Psoas muscle (tissue), 8 donors: ENCODE measurements at regions of chr5 and their contacts with region 1.

Region 1: DNA sequence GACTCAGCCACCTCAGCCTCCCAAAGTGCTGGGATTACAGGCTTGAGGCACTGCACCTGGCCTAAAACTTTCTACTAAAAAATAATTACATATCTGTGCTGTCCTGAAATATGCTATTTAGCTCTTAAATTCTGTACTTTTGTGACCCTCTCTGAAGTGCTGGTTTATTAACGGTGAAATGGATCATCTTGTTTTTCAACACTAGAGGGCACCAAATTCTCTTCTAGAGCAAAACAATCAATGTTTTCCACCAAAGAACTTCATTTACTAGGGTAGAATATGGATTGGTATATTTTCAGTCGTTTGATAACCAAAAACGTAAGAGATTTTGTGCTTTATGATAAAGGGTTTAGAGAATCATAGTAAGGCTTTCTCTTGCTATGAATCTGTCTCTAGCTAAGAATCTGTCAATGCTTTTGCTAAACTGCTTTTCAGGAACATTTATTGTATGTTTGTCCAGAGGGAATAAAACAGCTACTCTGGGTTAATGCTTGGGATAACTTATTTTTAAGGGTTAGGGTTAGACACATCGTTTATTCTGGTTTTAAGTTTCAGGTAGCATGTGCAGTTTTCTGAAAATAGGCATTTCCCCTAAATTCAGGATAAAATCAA is 63.6 kb downstream of the RNF180 start:
- DNase-seq: no peak
- ATAC-seq: peak in 1 of 4 donors; percentile 55
- H3K4me3 ChIP-seq: no peak overlapping the region
- H3K27ac ChIP-seq: no peak overlapping the region
- H3K4me1 ChIP-seq: no peaks in the 10 kb centered on the region
- H3K27me3 ChIP-seq: no peaks in the 10 kb centered on the region
- CTCF ChIP-seq: peak; percentile 68

Region 2: GRCh38 chr5:64140018-64140417 is 89.3 kb before region 1 on chr5:
- intact Hi-C with region 1: no loop called
- DNase-seq: no peak
- ATAC-seq: no peak
- H3K4me3 ChIP-seq: no peak overlapping the region
- H3K27ac ChIP-seq: no peak overlapping the region
- H3K4me1 ChIP-seq: peaks cover 10% of the 10 kb centered on the region
- H3K27me3 ChIP-seq: no peaks in the 10 kb centered on the region
- CTCF ChIP-seq: no peak

Region 3: DNA sequence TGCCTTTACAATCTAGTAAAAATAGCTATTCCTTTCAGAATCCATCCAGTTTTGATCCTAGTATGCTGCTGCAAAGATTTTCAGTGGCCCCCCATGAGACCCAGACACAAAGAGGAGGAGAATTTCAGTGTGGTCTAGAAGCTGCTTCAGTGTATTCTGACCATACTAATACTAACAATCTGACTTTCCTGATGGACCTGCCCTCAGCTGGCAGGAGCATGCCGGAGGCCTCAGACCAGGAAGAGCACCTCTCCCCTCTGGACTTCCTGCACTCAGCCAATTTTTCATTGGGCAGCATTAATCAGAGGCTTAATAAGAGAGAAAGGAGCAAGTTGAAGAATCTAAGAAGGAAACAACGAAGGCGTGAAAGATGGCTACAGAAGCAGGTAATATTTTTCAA is 15.1 kb before region 1 on chr5:
- intact Hi-C with region 1: loop called in 1 of 2 experiments (anchors 1 kb)
- DNase-seq: no peak
- ATAC-seq: no peak
- H3K4me3 ChIP-seq: no peak overlapping the region
- H3K27ac ChIP-seq: no peak overlapping the region
- H3K4me1 ChIP-seq: no peaks in the 10 kb centered on the region
- H3K27me3 ChIP-seq: no peaks in the 10 kb centered on the region
- CTCF ChIP-seq: no peak

Region 4: DNA sequence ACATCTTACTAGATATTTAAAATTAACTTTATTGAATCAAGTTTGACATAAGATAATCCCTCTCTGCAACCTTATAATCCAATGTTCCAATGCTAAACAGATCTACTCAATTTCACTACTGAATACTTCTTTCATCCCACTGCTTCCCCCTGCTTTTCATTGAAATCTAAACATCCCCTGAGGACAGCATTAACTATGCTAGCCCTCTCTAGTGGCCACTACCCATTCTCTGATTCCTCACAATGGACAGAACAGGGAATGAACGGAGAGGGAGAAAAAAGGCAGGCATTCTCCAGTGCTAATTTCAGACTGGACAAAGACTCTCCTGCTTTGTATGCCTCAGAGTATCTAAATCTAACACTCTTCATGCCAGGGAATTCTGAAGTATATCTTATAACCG is 222.3 kb after region 1 on chr5:
- intact Hi-C with region 1: loop called in 1 of 2 experiments (anchors 5 kb)
- DNase-seq: no peak
- ATAC-seq: no peak
- H3K4me3 ChIP-seq: no peak overlapping the region
- H3K27ac ChIP-seq: no peak overlapping the region
- H3K4me1 ChIP-seq: no peaks in the 10 kb centered on the region
- H3K27me3 ChIP-seq: no peaks in the 10 kb centered on the region
- CTCF ChIP-seq: no peak

Region 5: DNA sequence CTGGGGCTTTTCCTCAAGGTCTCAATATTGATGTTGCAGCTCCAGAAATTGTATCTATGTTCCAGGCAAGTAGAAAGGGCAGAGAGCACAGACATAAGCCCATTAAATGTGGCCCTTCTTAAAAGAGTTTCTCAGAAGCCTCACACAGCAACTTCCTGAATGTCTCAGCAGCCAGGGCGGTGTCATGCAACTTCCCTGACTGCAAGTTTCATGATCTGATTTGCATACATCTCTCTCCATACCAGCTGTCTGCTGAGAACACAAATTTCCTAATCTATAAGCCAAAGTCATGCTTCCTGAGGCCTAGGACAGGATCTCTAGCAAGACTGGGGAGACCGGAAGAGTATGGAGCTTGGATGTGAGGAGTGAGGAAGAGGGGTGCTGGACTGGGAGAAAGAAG is 289.5 kb after region 1 on chr5:
- intact Hi-C with region 1: loop called in 1 of 2 experiments (anchors 10 kb)
- DNase-seq: no peak
- ATAC-seq: no peak
- H3K4me3 ChIP-seq: no peak overlapping the region
- H3K27ac ChIP-seq: no peak overlapping the region
- H3K4me1 ChIP-seq: peaks cover 5% of the 10 kb centered on the region
- H3K27me3 ChIP-seq: no peaks in the 10 kb centered on the region
- CTCF ChIP-seq: no peak